ENCODE measurements at regions of chr17 and their contacts with region 1.

Region 1: GRCh38 chr17:17812211-17813057 is 24.4 kb downstream of the SREBF1 start:
- DNase-seq: peak; percentile 59
- H3K4me3 ChIP-seq: no peak overlapping the region
- H3K27ac ChIP-seq: no peak overlapping the region
- H3K4me1 ChIP-seq: peaks cover 14% of the 10 kb centered on the region
- H3K27me3 ChIP-seq: no peaks in the 10 kb centered on the region
- CTCF ChIP-seq: peak; percentile 81 to 89

Region 2: GRCh38 chr17:17672453-17673368 is 139.7 kb before region 1 on chr17:
- CTCF ChIA-PET with region 1: no interaction called
- dilution Hi-C with region 1: loop called (anchors 5 kb)
- in situ Hi-C with region 1: loop called in 1 of 2 experiments (anchors 25 kb)
- intact Hi-C with region 1: no loop called
- DNase-seq: peak; percentile 35
- H3K4me3 ChIP-seq: no peak overlapping the region
- H3K27ac ChIP-seq: no peak overlapping the region
- H3K4me1 ChIP-seq: peaks cover 63% of the 10 kb centered on the region
- H3K27me3 ChIP-seq: no peaks in the 10 kb centered on the region
- CTCF ChIP-seq: no peak

Region 3: GRCh38 chr17:17739388-17740066 is 72.9 kb before region 1 on chr17:
- CTCF ChIA-PET with region 1: no interaction called
- dilution Hi-C with region 1: loop called (anchors 5 kb)
- in situ Hi-C with region 1: no loop called
- intact Hi-C with region 1: no loop called
- DNase-seq: peak; percentile 42
- H3K4me3 ChIP-seq: no peak overlapping the region
- H3K27ac ChIP-seq: peak overlapping the region; percentile 80
- H3K4me1 ChIP-seq: peaks cover 55% of the 10 kb centered on the region
- H3K27me3 ChIP-seq: no peaks in the 10 kb centered on the region
- CTCF ChIP-seq: no peak

Region 4: DNA sequence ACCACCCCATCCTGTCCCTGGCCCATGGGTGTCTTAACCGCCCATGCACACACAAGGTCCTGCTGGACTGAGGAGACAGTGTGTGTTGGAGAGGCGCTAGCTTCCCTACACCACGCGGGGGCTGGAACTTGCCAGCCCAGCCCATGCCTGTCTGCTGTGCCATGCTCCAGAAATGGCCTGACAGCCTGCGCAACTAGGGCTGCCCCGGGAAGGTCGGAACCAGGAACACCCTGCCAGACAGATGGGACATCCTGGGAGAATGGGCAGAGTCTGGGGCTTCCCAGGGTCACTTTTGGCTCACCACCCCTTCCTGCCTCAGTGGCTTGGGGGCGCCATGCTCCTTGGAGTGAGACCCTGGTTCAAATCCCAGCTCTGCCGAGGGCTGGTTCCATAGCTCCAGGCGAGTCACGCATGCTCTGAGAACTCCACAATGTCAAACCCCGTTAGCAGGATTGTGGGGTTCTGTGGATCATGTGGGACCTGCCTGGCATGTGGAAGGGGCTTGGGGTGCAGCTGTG is 11.9 kb before region 1 on chr17:
- CTCF ChIA-PET with region 1: no interaction called
- dilution Hi-C with region 1: no loop called
- in situ Hi-C with region 1: no loop called
- intact Hi-C with region 1: no loop called
- DNase-seq: no peak
- H3K4me3 ChIP-seq: no peak overlapping the region
- H3K27ac ChIP-seq: no peak overlapping the region
- H3K4me1 ChIP-seq: peaks cover 5% of the 10 kb centered on the region
- H3K27me3 ChIP-seq: no peaks in the 10 kb centered on the region
- CTCF ChIP-seq: no peak

Region 5: DNA sequence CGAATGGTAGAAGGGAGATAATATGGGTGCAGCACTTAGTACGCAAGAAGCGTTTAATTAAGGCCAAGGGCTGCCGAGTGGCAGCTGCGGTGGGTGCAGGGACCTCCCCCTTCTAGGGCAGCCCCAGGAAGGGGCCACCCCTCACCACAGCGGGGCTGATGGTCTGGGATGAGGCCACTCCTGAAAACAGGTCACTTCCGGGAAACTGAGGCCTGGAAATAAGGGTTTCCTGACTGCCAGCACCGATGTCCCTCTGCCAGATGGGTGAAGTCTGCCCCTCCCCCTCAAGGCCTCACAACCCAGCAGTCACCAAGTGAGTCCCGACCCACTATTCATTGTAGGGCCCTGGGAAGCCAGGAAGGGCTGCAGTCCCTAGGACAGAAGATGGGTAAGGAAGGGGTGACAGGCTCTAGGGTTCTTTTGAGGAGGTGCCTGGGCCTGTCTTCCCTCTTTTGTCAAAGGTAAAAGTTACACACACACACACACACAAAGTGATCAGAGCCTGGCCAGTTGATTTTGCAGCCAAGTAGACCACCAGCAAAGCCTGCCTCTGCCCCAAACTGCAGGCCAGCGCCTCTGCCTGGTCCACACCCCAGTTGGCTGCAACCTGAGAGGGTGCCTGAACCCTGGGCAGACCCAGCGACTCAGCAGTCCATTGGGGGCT is 11.8 kb after region 1 on chr17:
- CTCF ChIA-PET with region 1: no interaction called
- dilution Hi-C with region 1: no loop called
- in situ Hi-C with region 1: no loop called
- intact Hi-C with region 1: no loop called
- DNase-seq: no peak
- H3K4me3 ChIP-seq: peak overlapping the region in 2 of 3 experiments; percentile 2 to 13
- H3K27ac ChIP-seq: peak overlapping the region; percentile 71
- H3K4me1 ChIP-seq: peaks cover 81% of the 10 kb centered on the region
- H3K27me3 ChIP-seq: no peaks in the 10 kb centered on the region
- CTCF ChIP-seq: no peak

Region 6: DNA sequence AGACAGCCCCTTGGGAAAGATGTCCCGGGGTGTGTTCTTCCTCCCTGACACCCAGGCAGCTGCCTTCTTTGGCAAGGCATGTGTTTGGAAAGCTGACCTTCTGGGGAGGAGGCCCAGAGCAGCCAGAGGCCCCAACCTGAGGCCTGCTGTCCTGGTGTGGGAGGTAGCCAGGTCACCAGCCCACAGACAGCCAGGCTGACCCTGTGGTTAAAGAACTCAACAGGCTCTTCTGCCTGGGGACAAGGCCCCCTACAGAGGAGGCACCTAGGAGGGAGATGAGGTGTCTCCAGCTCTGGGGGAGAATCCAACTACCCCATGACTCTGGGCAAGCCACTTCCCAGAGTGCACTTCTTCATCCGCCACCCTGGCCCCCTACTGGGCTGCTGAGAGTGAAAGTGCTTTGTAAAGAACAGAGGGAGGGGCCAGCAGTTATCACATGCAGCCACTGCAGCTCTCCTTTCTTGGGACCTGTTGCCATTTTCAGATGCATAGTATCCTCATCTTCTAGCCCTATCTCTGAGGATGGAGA is 37.5 kb after region 1 on chr17:
- CTCF ChIA-PET with region 1: no interaction called
- dilution Hi-C with region 1: loop called (anchors 5 kb)
- in situ Hi-C with region 1: no loop called
- intact Hi-C with region 1: no loop called
- DNase-seq: no peak
- H3K4me3 ChIP-seq: no peak overlapping the region
- H3K27ac ChIP-seq: no peak overlapping the region
- H3K4me1 ChIP-seq: peaks cover 19% of the 10 kb centered on the region
- H3K27me3 ChIP-seq: no peaks in the 10 kb centered on the region
- CTCF ChIP-seq: no peak

Region 7: DNA sequence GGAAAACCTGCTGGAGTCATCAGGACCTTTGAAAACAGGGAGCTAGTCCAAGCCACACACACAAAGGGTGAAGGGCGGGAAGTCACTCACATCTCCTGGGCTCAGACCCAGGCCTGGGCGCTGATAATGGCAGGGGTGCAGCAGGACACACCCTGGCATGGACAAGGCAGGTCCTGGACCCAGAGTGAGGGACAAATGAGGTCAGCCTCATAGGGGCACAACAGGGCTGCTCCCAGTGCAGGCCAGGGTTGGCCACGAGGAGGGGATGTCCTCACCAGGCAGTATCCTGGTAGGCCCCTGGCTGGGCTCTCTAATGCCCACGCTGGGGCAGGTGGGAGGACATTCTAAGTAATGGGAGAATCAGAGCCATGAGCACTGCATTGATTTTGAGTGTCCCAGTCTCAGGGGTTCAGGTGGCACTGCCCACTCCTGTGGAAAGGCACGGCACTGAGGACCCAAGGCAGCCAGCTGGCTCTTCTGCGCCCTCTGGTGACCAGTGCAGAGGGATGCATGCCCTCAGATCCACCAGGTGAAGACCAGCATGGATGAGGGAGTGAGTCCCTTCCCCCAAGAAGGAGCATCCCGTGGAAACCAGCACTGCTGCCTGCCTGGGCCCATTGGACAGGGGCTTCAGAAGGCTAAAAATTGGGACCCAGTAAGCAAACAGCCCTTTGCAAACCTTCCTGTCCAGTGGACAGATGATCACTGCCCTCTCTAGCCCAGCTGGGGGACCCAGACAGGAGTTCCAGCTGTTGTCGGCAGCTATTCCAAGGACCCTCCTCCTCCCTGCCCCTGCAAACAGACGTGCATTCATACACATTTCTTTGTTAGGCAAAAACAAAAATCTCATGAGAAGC is 47.7 kb after region 1 on chr17:
- CTCF ChIA-PET with region 1: no interaction called
- dilution Hi-C with region 1: no loop called
- in situ Hi-C with region 1: loop called in 1 of 2 experiments (anchors 5 kb)
- intact Hi-C with region 1: loop called (anchors 1 kb)
- DNase-seq: peak; percentile 43
- H3K4me3 ChIP-seq: no peak overlapping the region
- H3K27ac ChIP-seq: no peak overlapping the region
- H3K4me1 ChIP-seq: peaks cover 21% of the 10 kb centered on the region
- H3K27me3 ChIP-seq: no peaks in the 10 kb centered on the region
- CTCF ChIP-seq: peak; percentile 94 to 98

Region 8: GRCh38 chr17:18038861-18039534 is 226.6 kb after region 1 on chr17 and contains the starts of genes ATPAF2 and GID4:
- CTCF ChIA-PET with region 1: no interaction called
- dilution Hi-C with region 1: loop called (anchors 5 kb)
- in situ Hi-C with region 1: no loop called
- intact Hi-C with region 1: no loop called
- DNase-seq: peak; percentile 99
- H3K4me3 ChIP-seq: peak within 1 kb of the TSS; percentile 88 to 90 (median 89)
- H3K27ac ChIP-seq: peak within 1 kb of the TSS; percentile 65
- H3K4me1 ChIP-seq: peaks cover 24% of the 10 kb centered on the region
- H3K27me3 ChIP-seq: no peaks in the 10 kb centered on the region
- CTCF ChIP-seq: peak in 1 of 2 donors; percentile 32
- total RNA-seq, gene ATPAF2: 17.0 to 23.5 TPM
- total RNA-seq, gene GID4: 11.2 to 16.4 TPM